ENCODE measurements at regions of chr18 and their contacts with region 1.

Region 1: GRCh38 chr18:51668101-51668500 is 470.6 kb upstream of the MEX3C start:
- DNase-seq: peak; percentile 15
- ATAC-seq: no peak
- H3K4me3 ChIP-seq: no peak overlapping the region
- H3K27ac ChIP-seq: no peak overlapping the region
- H3K4me1 ChIP-seq: no peaks in the 10 kb centered on the region
- H3K27me3 ChIP-seq: no peaks in the 10 kb centered on the region
- CTCF ChIP-seq: peak; percentile 66

Region 2: GRCh38 chr18:51933903-51934302 is 265.8 kb after region 1 on chr18:
- CTCF ChIA-PET with region 1: no interaction called
- POLR2A ChIA-PET with region 1: no interaction called
- in situ Hi-C with region 1: no loop called
- intact Hi-C with region 1: no loop called
- DNase-seq: no peak
- ATAC-seq: no peak
- H3K4me3 ChIP-seq: no peak overlapping the region
- H3K27ac ChIP-seq: no peak overlapping the region
- H3K4me1 ChIP-seq: no peaks in the 10 kb centered on the region
- H3K27me3 ChIP-seq: no peaks in the 10 kb centered on the region
- CTCF ChIP-seq: no peak

Region 3: GRCh38 chr18:52288403-52289004 is 620.4 kb after region 1 on chr18:
- CTCF ChIA-PET with region 1: no interaction called
- POLR2A ChIA-PET with region 1: no interaction called
- in situ Hi-C with region 1: no loop called
- intact Hi-C with region 1: loop called (anchors 5 kb)
- DNase-seq: peak; percentile 8
- ATAC-seq: no peak
- H3K4me3 ChIP-seq: no peak overlapping the region
- H3K27ac ChIP-seq: no peak overlapping the region
- H3K4me1 ChIP-seq: no peaks in the 10 kb centered on the region
- H3K27me3 ChIP-seq: no peaks in the 10 kb centered on the region
- CTCF ChIP-seq: peak; percentile 75

Region 4: DNA sequence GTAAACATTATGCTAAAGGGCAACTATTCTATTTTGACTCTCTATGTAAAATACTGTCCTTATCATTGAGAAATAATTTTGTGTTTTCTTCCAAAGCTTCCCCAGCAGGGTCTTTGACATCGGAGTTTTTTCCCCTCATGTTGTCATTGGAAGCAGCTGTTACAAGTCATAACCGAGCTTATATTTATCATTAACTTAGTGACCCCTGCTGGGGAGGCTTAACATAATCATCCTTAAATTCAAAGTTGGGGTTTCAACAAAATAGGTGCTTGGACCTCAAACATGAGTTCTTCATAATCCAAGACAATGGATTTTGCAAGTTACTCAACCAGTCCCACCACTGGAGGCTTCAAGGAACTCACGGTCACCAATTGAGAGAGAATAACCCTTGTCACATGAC is 1002.8 kb after region 1 on chr18:
- CTCF ChIA-PET with region 1: no interaction called
- POLR2A ChIA-PET with region 1: no interaction called
- in situ Hi-C with region 1: no loop called
- intact Hi-C with region 1: loop called (anchors 10 kb)
- DNase-seq: no peak
- ATAC-seq: no peak
- H3K4me3 ChIP-seq: no peak overlapping the region
- H3K27ac ChIP-seq: no peak overlapping the region
- H3K4me1 ChIP-seq: no peaks in the 10 kb centered on the region
- H3K27me3 ChIP-seq: no peaks in the 10 kb centered on the region
- CTCF ChIP-seq: no peak; the same call in 1 of the 2 replicates

Measured in Panc1 (cell line).